ENCODE measurements at regions of chr18 and their contacts with region 1.

Region 1: GRCh38 chr18:47204908-47205522 is 28.9 kb upstream of the IER3IP1 start:
- DNase-seq: no peak
- H3K4me3 ChIP-seq: no peak overlapping the region
- H3K27ac ChIP-seq: no peak overlapping the region
- H3K4me1 ChIP-seq: no peaks in the 10 kb centered on the region
- H3K27me3 ChIP-seq: peaks cover 0 to 16% (median 0%) of the 10 kb centered on the region in 7 donors
- CTCF ChIP-seq: peak; percentile 24 to 79 (median 69)
- POLR2A ChIP-seq: no peak

Region 2: GRCh38 chr18:47100214-47100831 is 104.7 kb before region 1 on chr18:
- intact Hi-C with region 1: loop called (anchors 2 kb)
- DNase-seq: peak; percentile 78
- H3K4me3 ChIP-seq: no peak overlapping the region
- H3K27ac ChIP-seq: no peak overlapping the region
- H3K4me1 ChIP-seq: no peaks in the 10 kb centered on the region
- H3K27me3 ChIP-seq: no peaks in the 10 kb centered on the region
- CTCF ChIP-seq: peak in 10 of 11 experiments; percentile 12 to 71 (median 56)
- POLR2A ChIP-seq: no peak

Region 3: GRCh38 chr18:47260120-47260923 is 55.3 kb after region 1 on chr18:
- intact Hi-C with region 1: no loop called
- DNase-seq: no peak
- H3K4me3 ChIP-seq: no peak overlapping the region
- H3K27ac ChIP-seq: no peak overlapping the region
- H3K4me1 ChIP-seq: peaks cover 0 to 27% (median 12%) of the 10 kb centered on the region in 6 donors
- H3K27me3 ChIP-seq: peaks cover 0 to 100% (median 64%) of the 10 kb centered on the region in 7 donors
- CTCF ChIP-seq: no peak
- POLR2A ChIP-seq: no peak

Region 4: DNA sequence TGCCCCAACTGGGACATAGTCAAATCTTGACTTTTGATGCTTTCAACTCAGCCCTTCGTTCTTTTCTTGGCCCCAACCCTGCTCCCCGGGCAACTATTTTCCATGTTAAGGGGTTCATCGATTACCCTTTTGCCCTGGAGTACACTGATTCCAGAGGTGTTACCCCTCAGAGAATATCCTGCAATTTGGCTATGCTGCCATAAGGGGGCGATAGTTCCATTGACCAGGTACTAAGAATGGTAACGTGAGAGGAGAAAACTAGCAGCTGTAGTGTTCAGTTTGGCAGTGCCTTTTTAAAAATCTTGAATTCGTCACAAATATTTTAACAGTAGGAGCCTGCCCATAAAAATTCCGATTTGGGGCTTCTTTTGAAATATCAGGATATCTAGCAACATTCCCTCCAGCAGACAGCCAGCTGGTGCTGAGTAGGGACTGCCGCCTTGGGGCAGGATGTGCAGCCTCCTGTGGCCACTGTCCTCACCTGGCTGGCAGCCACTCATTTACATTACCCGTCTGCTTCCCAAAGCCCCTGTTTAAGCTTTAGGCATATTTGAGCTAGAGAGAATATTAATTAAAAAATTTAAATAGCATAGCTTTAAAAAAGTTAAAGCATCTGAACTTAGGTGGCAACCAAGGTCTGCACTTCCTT is 192.8 kb after region 1 on chr18:
- intact Hi-C with region 1: no loop called
- DNase-seq: no peak
- H3K4me3 ChIP-seq: no peak overlapping the region
- H3K27ac ChIP-seq: no peak overlapping the region
- H3K4me1 ChIP-seq: no peaks in the 10 kb centered on the region
- H3K27me3 ChIP-seq: peaks cover 0 to 16% (median 0%) of the 10 kb centered on the region in 7 donors
- CTCF ChIP-seq: peak in 4 of 11 experiments; percentile 8 to 36 (median 22)
- POLR2A ChIP-seq: no peak

Measured in spleen (tissue), 13 donors.